ENCODE measurements at regions of chr17 and their contacts with region 1.

Region 1: GRCh38 chr17:27519550-27519949 is 63.3 kb downstream of the KSR1 start:
- DNase-seq: no peak
- ATAC-seq: no peak
- H3K4me3 ChIP-seq: no peak overlapping the region
- H3K4me1 ChIP-seq: no peaks in the 10 kb centered on the region
- CTCF ChIP-seq: no peak

Region 2: GRCh38 chr17:27489045-27489715 is 30.4 kb before region 1 on chr17:
- intact Hi-C with region 1: no loop called
- DNase-seq: peak; percentile 53 to 81 (median 57)
- ATAC-seq: peak; percentile 76
- H3K4me3 ChIP-seq: no peak overlapping the region
- H3K4me1 ChIP-seq: peaks cover 6% of the 10 kb centered on the region
- CTCF ChIP-seq: no peak

Region 3: DNA sequence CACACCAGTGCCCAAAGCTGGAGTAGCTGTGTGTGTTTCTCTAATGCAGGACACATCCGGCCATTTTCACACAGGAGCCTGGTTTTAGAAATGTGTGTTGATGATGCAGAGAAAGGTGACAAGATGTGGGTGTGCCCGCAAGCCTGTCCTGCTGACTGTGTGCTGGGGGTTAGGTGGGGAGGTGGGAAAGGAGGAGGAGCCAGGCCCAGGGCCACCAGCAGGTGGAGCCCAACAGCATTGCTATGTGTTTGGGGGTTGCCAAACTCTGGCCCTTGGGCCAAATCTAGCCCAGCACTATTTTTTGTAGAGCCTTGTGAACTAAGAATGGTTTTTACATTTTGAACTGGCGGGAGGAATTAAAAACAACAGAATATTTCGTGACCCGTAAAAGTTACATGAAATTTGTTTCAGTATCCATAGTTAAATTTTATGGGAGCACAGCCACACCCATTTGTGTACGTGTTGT is 49.7 kb after region 1 on chr17:
- intact Hi-C with region 1: loop called in 1 of 2 experiments (anchors 10 kb)
- DNase-seq: peak in 1 of 3 donors; percentile 30
- ATAC-seq: peak; percentile 65
- H3K4me3 ChIP-seq: no peak overlapping the region
- H3K4me1 ChIP-seq: no peaks in the 10 kb centered on the region
- CTCF ChIP-seq: no peak

Region 4: DNA sequence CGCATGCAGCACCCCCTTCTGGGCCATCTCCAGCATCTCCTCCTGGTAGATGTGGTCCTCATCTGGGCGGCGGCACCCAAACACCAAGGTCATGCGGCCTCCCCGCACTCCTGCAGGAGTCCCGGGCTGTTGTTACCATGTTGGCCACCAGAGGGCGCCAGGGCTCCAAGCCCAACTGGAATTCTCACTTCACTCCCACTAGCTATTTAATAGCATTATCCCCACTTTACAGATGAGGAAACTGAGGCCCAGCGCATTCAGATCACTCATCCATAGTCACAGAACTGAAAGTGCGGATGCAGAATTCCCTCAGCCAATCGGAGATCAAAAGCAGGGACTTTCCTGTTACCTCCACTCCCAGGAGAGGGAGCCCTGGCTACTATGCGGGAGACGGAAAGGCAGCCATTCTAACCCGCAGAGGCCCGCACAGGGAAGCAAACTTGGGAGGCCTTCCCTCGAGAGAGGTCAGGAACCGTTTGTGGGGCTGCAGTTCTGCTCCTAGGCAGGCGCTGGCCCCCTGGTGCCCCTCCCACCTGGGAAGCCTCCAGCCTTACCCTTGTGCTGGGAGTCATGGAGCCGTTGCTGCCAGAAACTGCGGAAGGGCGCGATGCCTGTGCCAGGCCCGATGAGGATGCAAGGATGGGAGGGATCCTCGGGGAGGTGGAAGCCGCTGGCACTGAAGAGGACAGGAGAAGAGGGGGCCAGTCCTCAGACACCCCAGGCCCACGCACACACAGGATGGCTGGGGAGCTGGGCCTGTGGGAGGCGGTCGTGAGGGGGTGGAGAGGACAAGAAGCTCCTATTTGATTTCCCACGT is 240.7 kb after region 1 on chr17:
- intact Hi-C with region 1: no loop called
- DNase-seq: peak in 2 of 3 donors; percentile 79 to 84
- ATAC-seq: peak; percentile 67
- H3K4me3 ChIP-seq: no peak overlapping the region
- H3K4me1 ChIP-seq: no peaks in the 10 kb centered on the region
- CTCF ChIP-seq: peak; percentile 83

Measured in mucosa of descending colon (tissue), 3 donors.